Activated CD4-positive, alpha-beta T cell treated with anti-CD3 and anti-CD28 coated beads, Interleukin-2, amount 10 ng/mL, durations not matched to agents 24 days and 14 days (primary cell): ENCODE measurements at regions of chr6 and their contacts with region 1.

Region 1: DNA sequence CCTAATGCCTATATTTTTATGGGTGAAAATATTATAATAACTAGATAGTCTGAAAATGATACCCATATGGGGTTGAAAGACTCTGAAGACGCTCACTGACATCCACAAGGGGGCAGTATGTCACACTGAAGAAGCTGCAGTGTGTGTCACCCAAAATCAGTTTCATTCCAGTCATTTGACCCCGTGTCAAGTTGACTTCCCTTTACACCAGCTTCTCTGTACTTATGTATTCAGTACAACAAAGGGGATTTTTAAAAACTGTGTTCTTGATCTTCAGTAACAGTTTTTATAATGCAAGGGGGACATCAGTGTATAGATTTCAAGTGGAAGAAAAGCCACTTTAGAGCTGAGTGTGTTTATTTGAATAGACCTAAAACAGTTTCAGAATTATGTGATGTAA is 19.3 kb downstream of the FAXC start:
- DNase-seq: peak; percentile 87
- H3K4me3 Mint-ChIP-seq: no peak overlapping the region
- H3K27ac Mint-ChIP-seq: no peak overlapping the region
- H3K4me1 Mint-ChIP-seq: peaks cover 2% of the 10 kb centered on the region
- H3K27me3 Mint-ChIP-seq: peaks cover 10% of the 10 kb centered on the region

Region 2: DNA sequence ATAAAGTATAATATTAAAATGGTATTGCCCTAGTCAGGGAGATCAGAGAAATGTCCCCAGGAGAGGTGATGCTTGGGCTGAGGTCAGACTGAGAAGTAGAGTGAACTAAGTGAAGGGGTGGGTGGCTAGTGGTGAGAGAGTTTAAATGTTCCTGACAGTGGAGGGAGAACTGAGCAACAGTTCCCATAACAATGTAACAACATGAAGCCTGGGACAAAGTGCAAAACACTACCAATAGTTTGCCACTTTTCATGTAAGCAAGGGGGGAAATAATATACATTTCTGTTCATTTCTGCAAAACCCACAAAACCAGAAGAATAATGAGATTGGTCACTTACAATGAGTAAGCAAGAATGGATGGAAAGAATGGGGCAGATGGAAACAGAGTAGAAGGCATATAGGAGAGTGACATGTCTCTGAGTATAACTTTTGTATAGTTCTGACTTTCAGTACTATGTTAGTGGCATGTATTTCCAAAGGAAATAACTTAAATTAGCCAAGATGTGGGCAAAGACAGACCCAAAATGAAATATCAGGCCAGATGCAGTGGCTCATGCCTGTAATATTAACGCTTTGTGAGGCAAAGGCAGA is 32.6 kb after region 1 on chr6:
- intact Hi-C with region 1: loop called (anchors 1 kb)
- DNase-seq: no peak
- H3K4me3 Mint-ChIP-seq: no peak overlapping the region
- H3K27ac Mint-ChIP-seq: peak overlapping the region; percentile 20
- H3K4me1 Mint-ChIP-seq: peaks cover 9% of the 10 kb centered on the region
- H3K27me3 Mint-ChIP-seq: peaks cover 12% of the 10 kb centered on the region

Region 3: DNA sequence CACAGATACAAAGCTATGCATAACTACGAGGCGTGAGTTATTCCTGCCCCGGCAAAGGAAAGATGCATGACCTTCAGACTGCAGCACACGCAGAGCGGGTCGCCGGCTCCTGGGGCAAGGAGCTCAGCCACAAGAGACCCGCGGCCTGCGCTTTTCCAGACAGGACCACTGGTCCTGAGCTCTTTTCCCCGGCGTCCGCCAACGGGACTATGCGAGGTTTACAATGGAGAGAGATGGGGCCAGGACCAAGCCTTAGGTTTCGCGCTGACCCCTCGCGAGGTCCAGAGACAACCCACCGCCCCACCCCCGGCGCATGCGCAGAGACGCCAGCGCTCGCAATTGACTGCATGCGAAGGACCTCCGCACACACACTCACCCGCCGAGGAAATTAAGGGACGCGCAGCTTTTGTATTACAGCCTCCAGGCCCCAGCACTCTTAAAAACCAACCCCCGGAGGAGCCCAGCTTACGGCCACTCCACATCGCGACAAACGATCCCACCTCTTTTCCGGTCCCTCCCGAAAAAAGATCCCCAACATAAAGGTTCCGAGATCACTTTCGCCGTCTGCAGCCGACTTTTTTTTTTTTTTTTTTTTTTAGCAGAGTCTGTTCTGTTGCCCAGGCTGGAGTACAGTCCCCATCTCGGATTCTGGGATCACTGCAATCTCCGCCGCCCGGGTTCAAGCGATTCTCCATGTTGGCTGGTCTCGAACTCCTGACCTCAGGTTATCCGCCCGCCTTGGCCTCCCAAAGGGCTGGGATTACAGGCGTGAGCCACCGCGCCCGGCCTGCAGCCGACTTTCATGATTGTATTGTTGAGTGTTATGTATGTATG is 63.8 kb after region 1 on chr6 and contains the start of gene COQ3:
- intact Hi-C with region 1: loop called (anchors 1 kb)
- DNase-seq: peak; percentile 91
- H3K4me3 Mint-ChIP-seq: peak within 1 kb of the TSS; percentile 96
- H3K27ac Mint-ChIP-seq: peak within 1 kb of the TSS; percentile 91
- H3K4me1 Mint-ChIP-seq: peaks cover 15% of the 10 kb centered on the region
- H3K27me3 Mint-ChIP-seq: no peaks in the 10 kb centered on the region
- total RNA-seq, gene COQ3: 13.4 and 14.4 TPM in 2 replicates

Region 4: DNA sequence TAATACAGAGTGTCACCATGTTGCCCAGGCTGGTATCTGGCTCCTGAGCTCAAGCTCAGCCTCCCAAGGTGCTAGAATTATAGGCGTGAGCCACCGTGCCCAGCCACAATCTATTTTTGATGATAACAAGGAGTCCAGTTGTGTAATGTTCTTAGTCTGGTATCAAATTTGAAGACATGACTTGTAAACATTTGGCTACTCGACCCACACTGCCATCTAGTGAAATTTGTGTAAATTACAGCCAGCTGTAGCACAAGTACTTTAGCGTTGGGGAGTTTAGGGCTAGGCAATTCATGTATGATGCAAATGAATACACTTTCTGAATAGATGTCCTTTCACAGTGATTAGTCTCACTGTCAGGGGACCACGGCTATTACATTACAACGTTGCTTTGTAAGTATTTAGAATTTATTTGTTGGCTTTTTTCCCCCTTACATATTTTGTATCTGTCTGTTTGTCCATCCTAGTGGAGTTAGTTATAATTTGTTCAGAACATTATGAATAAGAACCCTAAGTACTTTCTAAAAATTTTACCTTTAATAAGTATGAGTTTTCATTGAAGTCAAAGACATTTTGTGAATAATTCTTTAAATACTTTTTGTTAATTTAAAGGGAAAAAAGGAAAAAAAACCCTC is 416.2 kb after region 1 on chr6:
- intact Hi-C with region 1: loop called (anchors 5 kb)
- DNase-seq: peak; percentile 86
- H3K4me3 Mint-ChIP-seq: no peak overlapping the region
- H3K27ac Mint-ChIP-seq: no peak overlapping the region
- H3K4me1 Mint-ChIP-seq: no peaks in the 10 kb centered on the region
- H3K27me3 Mint-ChIP-seq: peaks cover 31% of the 10 kb centered on the region